Breast epithelium (tissue), 4 donors: ENCODE measurements at regions of chr4 and their contacts with region 1.

Region 1: DNA sequence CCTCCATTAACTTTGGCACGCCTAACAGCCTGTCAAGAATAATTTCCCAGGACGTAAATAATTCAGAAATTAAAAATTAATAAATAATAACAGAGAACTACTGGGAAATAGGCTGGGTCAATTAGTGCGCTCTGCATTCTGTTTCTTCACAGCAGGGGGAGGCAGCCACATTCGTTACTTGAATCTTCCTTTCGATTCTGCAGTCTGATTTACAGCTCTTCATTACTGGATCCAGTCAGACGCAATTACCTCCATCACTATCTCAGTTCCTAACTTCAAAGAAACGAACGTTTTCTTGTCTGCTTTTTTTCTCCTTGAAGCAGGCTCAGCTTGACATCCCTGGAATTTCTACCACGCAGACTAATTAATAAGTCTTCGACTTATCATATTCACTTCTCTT is 9.0 kb upstream of the RPL34 start:
- DNase-seq: no peak
- H3K4me3 ChIP-seq: peak overlapping the region in 2 of 3 donors; percentile 31 to 32
- H3K27ac ChIP-seq: no peak overlapping the region
- H3K4me1 ChIP-seq: no peaks in the 10 kb centered on the region
- H3K27me3 ChIP-seq: no peaks in the 10 kb centered on the region
- CTCF ChIP-seq: no peak
- POLR2A ChIP-seq: no peak

Region 2: GRCh38 chr4:107843391-107843790 is 768.0 kb before region 1 on chr4:
- intact Hi-C with region 1: loop called (anchors 5 kb)
- DNase-seq: no peak
- H3K4me3 ChIP-seq: no peak overlapping the region
- H3K27ac ChIP-seq: no peak overlapping the region
- H3K4me1 ChIP-seq: no peaks in the 10 kb centered on the region
- H3K27me3 ChIP-seq: no peaks in the 10 kb centered on the region
- CTCF ChIP-seq: no peak
- POLR2A ChIP-seq: no peak

Region 3: GRCh38 chr4:108650212-108651013 is 39.0 kb after region 1 on chr4 and contains the start of gene OSTC:
- intact Hi-C with region 1: no loop called
- DNase-seq: peak; percentile 92
- H3K4me3 ChIP-seq: peak within 1 kb of the TSS; percentile 72 to 78 (median 77)
- H3K27ac ChIP-seq: peak within 1 kb of the TSS; percentile 88
- H3K4me1 ChIP-seq: no peaks in the 10 kb centered on the region
- H3K27me3 ChIP-seq: no peaks in the 10 kb centered on the region
- CTCF ChIP-seq: no peak
- POLR2A ChIP-seq: peak; percentile 70
- total RNA-seq, gene OSTC: 53.4 to 84.6 (median 63.1) TPM

Region 4: GRCh38 chr4:108917255-108917654 is 305.9 kb after region 1 on chr4:
- intact Hi-C with region 1: no loop called
- DNase-seq: no peak
- H3K4me3 ChIP-seq: no peak overlapping the region
- H3K27ac ChIP-seq: no peak overlapping the region
- H3K4me1 ChIP-seq: no peaks in the 10 kb centered on the region
- H3K27me3 ChIP-seq: no peaks in the 10 kb centered on the region
- CTCF ChIP-seq: no peak
- POLR2A ChIP-seq: no peak

Region 5: DNA sequence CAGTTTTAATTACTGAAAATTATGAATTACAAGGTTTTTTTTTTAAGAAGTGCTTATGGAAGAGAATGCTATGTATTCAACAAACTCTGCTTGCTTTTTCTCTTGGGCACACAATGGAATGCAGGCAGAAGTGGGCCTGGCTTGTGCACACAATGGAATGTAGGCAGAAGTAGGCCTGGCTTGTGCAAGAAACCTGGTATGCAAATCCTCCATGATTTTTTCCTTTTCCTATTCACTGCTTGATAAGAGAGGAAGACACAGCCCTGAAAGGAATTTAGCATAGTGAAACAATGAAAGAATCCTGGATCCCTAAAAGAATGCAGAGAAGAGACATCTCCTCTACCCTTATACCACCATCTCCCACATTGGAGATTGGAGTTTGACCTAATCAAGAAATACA is 552.6 kb after region 1 on chr4:
- intact Hi-C with region 1: no loop called
- DNase-seq: no peak
- H3K4me3 ChIP-seq: no peak overlapping the region
- H3K27ac ChIP-seq: no peak overlapping the region
- H3K4me1 ChIP-seq: no peaks in the 10 kb centered on the region
- H3K27me3 ChIP-seq: no peaks in the 10 kb centered on the region
- CTCF ChIP-seq: no peak
- POLR2A ChIP-seq: no peak

Region 6: GRCh38 chr4:110013904-110014632 is 1402.7 kb after region 1 on chr4:
- intact Hi-C with region 1: loop called (anchors 5 kb)
- DNase-seq: no peak
- H3K4me3 ChIP-seq: no peak overlapping the region
- H3K27ac ChIP-seq: no peak overlapping the region
- H3K4me1 ChIP-seq: no peaks in the 10 kb centered on the region
- H3K27me3 ChIP-seq: no peaks in the 10 kb centered on the region
- CTCF ChIP-seq: no peak
- POLR2A ChIP-seq: no peak